ENCODE measurements at regions of chr10 and their contacts with region 1.

Region 1: DNA sequence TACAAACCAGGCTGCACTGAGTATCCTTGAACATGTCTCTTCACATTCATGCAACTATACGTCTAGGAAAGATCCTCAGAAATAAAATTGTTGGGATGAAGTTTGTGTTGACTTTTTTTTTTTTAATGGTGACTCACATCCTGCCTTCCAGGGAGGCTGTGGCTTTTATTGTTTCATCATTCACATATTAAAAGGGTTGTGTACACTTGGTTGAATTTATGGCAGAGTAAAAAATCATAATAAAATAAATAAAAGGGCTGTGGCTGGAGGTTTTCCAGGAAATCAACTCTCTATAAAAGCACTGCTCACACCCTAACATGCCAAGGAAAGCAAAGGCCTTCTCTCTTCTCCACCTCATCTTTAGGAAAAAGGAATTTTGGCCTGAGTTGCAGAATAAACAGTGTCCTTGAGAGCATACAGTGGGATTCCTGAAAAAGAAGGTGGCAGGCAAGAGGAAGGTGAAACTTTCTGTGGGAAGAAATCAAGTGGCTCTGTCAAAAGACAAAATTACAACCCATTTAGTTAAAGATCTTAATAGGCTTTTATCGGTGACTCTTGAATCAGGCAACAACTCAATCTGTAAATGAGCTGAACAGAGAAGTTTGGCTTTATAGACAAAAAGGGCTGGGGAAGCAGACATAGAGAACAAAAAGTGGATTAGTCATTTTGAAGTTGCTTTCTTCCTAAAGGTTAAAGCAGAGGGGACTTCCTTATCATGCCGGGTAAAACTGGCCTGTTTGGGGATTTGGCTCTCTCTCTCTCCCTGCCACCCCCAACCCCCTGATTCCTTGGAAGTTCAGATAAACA is 41.6 kb upstream of the FHIP2A start:
- DNase-seq: peak; percentile 97
- H3K4me3 ChIP-seq: no peak overlapping the region
- H3K27ac ChIP-seq: peak overlapping the region; percentile 91
- H3K4me1 ChIP-seq: peaks cover 21% of the 10 kb centered on the region
- H3K27me3 ChIP-seq: no peaks in the 10 kb centered on the region
- CTCF ChIP-seq: no peak
- POLR2A ChIP-seq: no peak

Region 2: DNA sequence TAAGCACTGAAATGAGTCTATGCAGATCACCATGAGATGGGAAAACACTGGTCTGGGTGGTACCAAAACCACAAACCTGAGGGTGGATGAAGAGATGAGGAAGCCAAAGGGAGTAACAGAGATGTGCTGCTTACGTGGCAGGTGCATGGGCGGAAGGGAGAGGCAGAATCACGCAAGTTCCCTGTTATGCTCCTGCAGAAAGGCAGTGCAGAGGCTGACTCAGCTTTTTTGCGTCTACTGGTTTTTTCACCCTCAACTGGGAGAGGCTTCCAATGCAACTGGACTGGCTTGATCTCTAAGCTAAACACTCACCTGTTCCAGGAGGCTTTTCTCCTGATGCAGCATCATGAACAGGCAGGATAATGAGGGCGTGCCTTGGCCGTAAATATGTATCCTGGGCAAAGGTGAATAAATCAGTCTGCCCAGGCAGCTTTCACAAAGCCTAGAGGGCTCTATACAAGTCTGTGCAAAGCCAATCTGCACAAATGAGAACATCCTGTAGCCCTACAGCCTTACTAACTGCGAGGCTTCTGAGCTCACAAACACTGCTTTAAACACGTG is 280.3 kb before region 1 on chr10:
- CTCF ChIA-PET with region 1: no interaction called
- POLR2A ChIA-PET with region 1: no interaction called
- dilution Hi-C with region 1: no loop called
- intact Hi-C with region 1: no loop called
- DNase-seq: no peak
- H3K4me3 ChIP-seq: no peak overlapping the region
- H3K27ac ChIP-seq: no peak overlapping the region
- H3K4me1 ChIP-seq: peaks cover 21% of the 10 kb centered on the region
- H3K27me3 ChIP-seq: no peaks in the 10 kb centered on the region
- CTCF ChIP-seq: no peak
- POLR2A ChIP-seq: no peak

Region 3: DNA sequence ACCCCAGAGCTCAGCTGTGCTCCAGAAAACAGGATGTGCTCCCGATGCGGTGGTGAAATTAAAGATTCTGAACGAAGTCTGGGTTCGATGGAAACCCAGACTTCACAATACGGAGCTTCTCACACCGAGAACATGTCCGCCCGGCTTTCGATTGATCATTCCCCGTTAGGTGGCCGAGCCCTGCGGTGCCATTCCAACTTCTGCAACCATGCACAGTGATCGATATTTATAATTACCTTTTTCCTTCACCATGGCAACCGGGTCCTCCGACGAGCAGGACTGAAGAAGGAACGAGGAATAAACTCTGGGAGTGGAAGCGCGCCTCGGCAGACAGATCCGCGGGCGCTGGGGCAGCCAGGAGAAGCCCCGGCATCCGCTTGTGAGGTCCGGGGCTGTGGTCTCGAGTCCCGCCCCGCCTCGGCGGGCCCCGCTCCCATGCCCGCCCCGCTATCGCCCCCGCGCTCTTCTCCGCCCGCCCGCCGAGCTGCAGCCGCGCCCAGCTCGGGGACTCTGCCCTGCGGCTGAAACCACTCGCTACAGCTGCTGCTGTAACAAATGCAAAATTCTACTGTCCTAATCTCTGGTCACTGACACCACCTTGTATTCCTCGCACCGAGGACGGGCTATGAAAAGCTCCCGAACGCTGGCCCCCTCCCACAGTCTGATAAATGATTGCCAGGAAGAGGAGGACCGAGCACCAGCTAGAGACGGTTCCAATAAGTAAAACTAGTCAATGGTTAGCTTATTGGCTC is 148.2 kb before region 1 on chr10:
- CTCF ChIA-PET with region 1: no interaction called
- POLR2A ChIA-PET with region 1: no interaction called
- dilution Hi-C with region 1: no loop called
- intact Hi-C with region 1: loop called (anchors 5 kb)
- DNase-seq: peak; percentile 60
- H3K4me3 ChIP-seq: peak overlapping the region; percentile 56 to 75 (median 71)
- H3K27ac ChIP-seq: no peak overlapping the region
- H3K4me1 ChIP-seq: peaks cover 39% of the 10 kb centered on the region
- H3K27me3 ChIP-seq: no peaks in the 10 kb centered on the region
- CTCF ChIP-seq: no peak
- POLR2A ChIP-seq: no peak

Region 4: GRCh38 chr10:114694752-114695151 is 85.3 kb before region 1 on chr10:
- CTCF ChIA-PET with region 1: interaction called, 15 read pairs
- POLR2A ChIA-PET with region 1: no interaction called
- dilution Hi-C with region 1: no loop called
- intact Hi-C with region 1: no loop called
- DNase-seq: peak; percentile 62
- H3K4me3 ChIP-seq: no peak overlapping the region
- H3K27ac ChIP-seq: no peak overlapping the region
- H3K4me1 ChIP-seq: peaks cover 15% of the 10 kb centered on the region
- H3K27me3 ChIP-seq: no peaks in the 10 kb centered on the region
- CTCF ChIP-seq: peak; percentile 54 to 70
- POLR2A ChIP-seq: no peak

Region 5: DNA sequence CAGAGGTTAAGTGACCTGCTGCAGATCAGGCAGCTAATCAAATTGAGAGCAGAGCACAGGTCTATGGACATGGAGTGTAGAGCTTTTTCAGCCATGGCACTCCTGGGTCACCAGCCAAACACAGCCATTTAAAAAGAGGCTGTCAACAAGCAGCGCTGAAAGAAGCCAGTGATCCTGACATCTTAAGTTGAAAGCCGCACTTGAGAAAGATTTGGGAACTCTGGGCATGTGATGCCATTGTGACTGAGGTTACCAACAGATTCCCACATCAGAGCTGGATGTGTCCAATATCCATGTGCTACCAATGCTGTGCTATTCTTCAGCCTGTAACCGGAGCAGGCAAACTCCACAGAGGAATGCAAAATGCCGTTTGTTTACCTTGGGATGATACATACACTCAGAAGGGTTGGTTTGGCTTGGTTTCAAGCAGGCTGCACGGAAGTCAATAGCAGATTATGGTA is 65.7 kb before region 1 on chr10:
- CTCF ChIA-PET with region 1: interaction called, 9 read pairs
- POLR2A ChIA-PET with region 1: no interaction called
- dilution Hi-C with region 1: no loop called
- intact Hi-C with region 1: loop called (anchors 1 kb)
- DNase-seq: peak; percentile 93
- H3K4me3 ChIP-seq: no peak overlapping the region
- H3K27ac ChIP-seq: peak overlapping the region; percentile 58
- H3K4me1 ChIP-seq: peaks cover 37% of the 10 kb centered on the region
- H3K27me3 ChIP-seq: no peaks in the 10 kb centered on the region
- CTCF ChIP-seq: no peak
- POLR2A ChIP-seq: no peak

Region 6: GRCh38 chr10:114749014-114749413 is 31.0 kb before region 1 on chr10:
- CTCF ChIA-PET with region 1: interaction called, 6 read pairs
- POLR2A ChIA-PET with region 1: no interaction called
- dilution Hi-C with region 1: no loop called
- intact Hi-C with region 1: loop called (anchors 1 kb)
- DNase-seq: peak; percentile 98
- H3K4me3 ChIP-seq: no peak overlapping the region
- H3K27ac ChIP-seq: no peak overlapping the region
- H3K4me1 ChIP-seq: peaks cover 5% of the 10 kb centered on the region
- H3K27me3 ChIP-seq: no peaks in the 10 kb centered on the region
- CTCF ChIP-seq: no peak
- POLR2A ChIP-seq: no peak

Region 7: GRCh38 chr10:114767101-114767985 is 12.7 kb before region 1 on chr10:
- CTCF ChIA-PET with region 1: no interaction called
- POLR2A ChIA-PET with region 1: no interaction called
- dilution Hi-C with region 1: no loop called
- intact Hi-C with region 1: loop called (anchors 1 kb)
- DNase-seq: peak; percentile 65
- H3K4me3 ChIP-seq: peak overlapping the region; percentile 59 to 68 (median 62)
- H3K27ac ChIP-seq: no peak overlapping the region
- H3K4me1 ChIP-seq: peaks cover 15% of the 10 kb centered on the region
- H3K27me3 ChIP-seq: peaks cover 0 to 4% of the 10 kb centered on the region in 2 experiments
- CTCF ChIP-seq: no peak
- POLR2A ChIP-seq: no peak

Region 8: GRCh38 chr10:115129752-115130151 is 349.7 kb after region 1 on chr10:
- CTCF ChIA-PET with region 1: no interaction called
- POLR2A ChIA-PET with region 1: no interaction called
- dilution Hi-C with region 1: no loop called
- intact Hi-C with region 1: loop called (anchors 5 kb)
- DNase-seq: peak; percentile 46
- H3K4me3 ChIP-seq: no peak overlapping the region
- H3K27ac ChIP-seq: no peak overlapping the region
- H3K4me1 ChIP-seq: no peaks in the 10 kb centered on the region
- H3K27me3 ChIP-seq: no peaks in the 10 kb centered on the region
- CTCF ChIP-seq: no peak
- POLR2A ChIP-seq: no peak

Measured in endothelial cell of umbilical vein (primary cell).